ENCODE measurements at regions of chrX and their contacts with region 1.

Region 1: DNA sequence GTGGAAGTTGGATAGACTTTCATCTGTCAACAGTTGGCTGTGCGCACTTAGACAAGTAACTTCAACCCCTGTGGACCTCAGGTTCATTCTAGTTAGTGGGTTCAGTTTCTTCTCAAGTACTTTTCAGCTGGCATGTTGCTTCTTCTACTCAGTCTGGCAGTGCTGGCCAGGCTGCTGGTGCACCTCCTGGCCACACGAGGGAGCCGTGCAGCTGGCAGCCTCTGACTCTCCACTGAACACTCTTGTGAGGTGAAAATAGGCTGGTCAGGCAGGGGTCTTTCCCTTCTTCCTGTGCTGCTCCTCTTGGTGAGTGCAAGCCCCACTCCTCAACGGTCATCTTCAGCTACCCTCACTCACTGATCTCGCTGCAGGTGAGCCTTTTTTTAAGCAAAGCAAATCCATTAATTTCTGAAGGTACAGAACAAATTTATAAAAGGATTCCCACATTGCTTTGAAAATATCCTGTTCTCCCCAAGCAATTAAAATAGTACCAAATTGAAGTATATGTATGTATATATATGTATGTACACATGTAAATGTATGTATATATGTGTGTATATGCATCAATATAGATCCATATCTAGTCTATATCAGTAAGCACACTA is 30.6 kb downstream of the LONRF3 start:
- DNase-seq: peak; percentile 57
- ATAC-seq: peak; percentile 95
- H3K4me3 ChIP-seq: no peak overlapping the region
- H3K27ac ChIP-seq: no peak overlapping the region; the same call in 1 of the 2 replicates
- H3K4me1 ChIP-seq: peaks cover 14% of the 10 kb centered on the region; the same call in 1 of the 2 replicates
- H3K27me3 ChIP-seq: no peaks in the 10 kb centered on the region
- CTCF ChIP-seq: peak; percentile 95

Region 2: DNA sequence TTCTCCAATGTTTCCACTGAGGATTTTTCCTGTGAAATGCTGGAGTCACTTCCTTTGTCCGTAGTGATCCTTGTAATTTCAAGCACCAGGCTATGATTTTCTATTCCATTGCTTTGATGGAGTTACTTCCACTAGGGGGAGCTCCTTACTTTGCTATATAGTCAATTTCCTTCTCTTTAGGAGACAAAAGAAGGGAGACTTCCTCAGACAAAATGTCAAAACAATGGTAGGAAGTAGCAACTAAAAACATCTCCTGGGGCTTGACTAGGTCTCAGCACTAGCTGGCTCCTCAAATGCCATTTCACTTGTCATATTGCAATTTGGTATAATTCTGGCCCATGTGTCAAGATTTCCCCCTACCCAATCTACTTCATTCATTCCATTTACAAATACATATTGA is 157.3 kb before region 1 on chrX:
- CTCF ChIA-PET with region 1: no interaction called
- POLR2A ChIA-PET with region 1: interaction called, 3 read pairs
- in situ Hi-C with region 1: no loop called
- intact Hi-C with region 1: loop called (anchors 5 kb)
- DNase-seq: peak; percentile 53
- ATAC-seq: peak; percentile 87
- H3K4me3 ChIP-seq: no peak overlapping the region
- H3K27ac ChIP-seq: no peak overlapping the region
- H3K4me1 ChIP-seq: no peaks in the 10 kb centered on the region
- H3K27me3 ChIP-seq: no peaks in the 10 kb centered on the region
- CTCF ChIP-seq: peak; percentile 70

Region 3: DNA sequence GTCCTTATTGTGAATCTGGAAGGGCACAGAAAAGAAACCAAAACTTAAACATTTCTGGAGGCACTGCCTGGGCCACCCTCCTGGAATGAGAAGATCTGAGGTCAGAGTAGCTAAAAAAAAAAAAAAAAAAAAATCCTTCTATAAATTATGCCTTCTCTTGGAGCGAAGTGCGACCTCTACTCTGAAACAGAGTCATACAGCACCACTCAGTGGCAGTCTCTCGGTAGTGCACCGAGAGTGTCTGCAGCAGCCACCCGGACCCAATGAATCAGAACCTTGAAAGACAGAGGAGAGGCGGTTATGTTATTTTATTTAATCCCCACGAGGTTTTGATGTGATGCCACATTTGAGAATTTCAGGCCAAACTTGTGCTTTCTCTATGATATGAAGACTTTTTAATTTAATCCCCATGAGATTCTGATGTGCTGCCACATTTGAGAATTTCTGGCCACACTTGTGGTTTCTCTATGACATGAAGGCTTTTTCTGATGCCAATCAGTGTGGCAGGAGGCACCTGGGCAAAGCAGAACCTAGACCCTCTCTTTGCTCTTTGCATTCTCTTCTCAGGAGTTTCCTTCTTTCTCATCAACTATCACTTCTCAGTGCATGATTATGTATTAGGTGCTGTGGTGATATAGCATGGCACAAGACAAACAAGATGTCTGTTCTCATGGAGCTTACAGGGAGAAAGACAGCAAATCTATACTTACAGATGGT is 62.2 kb after region 1 on chrX:
- CTCF ChIA-PET with region 1: interaction called, 6 read pairs
- POLR2A ChIA-PET with region 1: no interaction called
- in situ Hi-C with region 1: no loop called
- intact Hi-C with region 1: loop called (anchors 2 kb)
- DNase-seq: peak; percentile 36
- ATAC-seq: peak; percentile 88
- H3K4me3 ChIP-seq: no peak overlapping the region
- H3K27ac ChIP-seq: 0 out of 2 replicates have a peak overlapping the region, but pooled peaks have one; percentile 49
- H3K4me1 ChIP-seq: peaks cover 4% of the 10 kb centered on the region; the same call in 1 of the 2 replicates
- H3K27me3 ChIP-seq: no peaks in the 10 kb centered on the region
- CTCF ChIP-seq: peak; percentile 79

Region 4: DNA sequence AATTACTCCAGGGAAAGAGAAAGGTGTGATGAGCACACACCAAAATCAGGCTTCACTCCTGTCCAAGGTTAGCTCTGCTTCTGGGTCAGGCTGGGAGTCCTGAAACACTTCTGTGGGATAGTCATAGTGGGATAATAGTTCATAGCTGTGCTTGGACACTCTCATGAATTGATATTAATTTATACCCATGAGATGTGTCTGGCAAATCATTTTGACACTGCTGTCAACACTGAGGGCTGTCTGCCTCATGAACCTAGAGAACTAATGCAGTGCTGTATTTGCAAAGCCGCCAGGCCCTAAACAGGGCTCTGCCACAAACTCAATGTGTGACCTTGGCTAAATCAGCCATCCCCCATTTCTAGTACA is 206.6 kb after region 1 on chrX:
- CTCF ChIA-PET with region 1: no interaction called
- POLR2A ChIA-PET with region 1: no interaction called
- in situ Hi-C with region 1: no loop called
- intact Hi-C with region 1: loop called (anchors 10 kb)
- DNase-seq: no peak
- ATAC-seq: no peak
- H3K4me3 ChIP-seq: no peak overlapping the region
- H3K27ac ChIP-seq: no peak overlapping the region
- H3K4me1 ChIP-seq: no peaks in the 10 kb centered on the region
- H3K27me3 ChIP-seq: peaks cover 22% of the 10 kb centered on the region
- CTCF ChIP-seq: no peak

Region 5: DNA sequence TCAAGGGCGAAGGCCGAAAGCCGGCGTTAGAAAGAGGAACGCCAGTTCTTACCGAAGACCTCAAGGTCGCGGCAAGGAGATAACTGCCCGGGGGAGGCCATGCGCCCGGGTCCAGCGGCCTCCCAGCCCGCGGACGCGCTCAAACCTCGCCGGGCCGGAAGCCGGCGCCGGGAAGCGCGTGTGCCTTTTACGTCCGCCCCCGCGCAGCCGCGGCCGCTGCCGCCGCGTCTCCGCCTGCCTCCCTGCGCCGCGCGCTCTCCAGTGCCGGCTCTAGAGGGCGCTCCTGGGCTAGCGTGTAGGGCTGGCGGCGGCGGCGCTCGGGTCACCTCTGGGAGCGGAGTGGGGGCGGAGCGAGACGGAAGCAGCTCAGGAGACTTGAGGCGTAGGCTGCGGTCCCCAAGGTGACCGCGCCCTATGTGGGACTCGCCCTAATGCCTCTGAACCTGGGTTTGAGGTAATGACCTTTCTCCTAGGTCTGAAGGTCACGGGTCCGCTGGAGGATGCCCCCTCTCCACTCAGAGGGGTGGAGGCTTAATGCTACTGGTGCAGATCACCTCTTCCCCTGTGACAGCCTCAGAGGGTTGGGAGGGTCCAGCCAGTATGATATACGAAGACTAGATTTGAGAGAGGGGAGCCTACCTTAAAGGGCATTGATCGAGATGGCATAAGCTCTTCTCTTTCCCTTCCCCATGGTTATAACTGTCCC is 464.1 kb after region 1 on chrX:
- CTCF ChIA-PET with region 1: no interaction called
- POLR2A ChIA-PET with region 1: interaction called, 12 read pairs
- in situ Hi-C with region 1: no loop called
- intact Hi-C with region 1: no loop called
- DNase-seq: no peak
- ATAC-seq: peak; percentile 78
- H3K4me3 ChIP-seq: peak overlapping the region; percentile 92 to 96
- H3K27ac ChIP-seq: peak overlapping the region; percentile 90
- H3K4me1 ChIP-seq: peaks cover 17% of the 10 kb centered on the region
- H3K27me3 ChIP-seq: no peaks in the 10 kb centered on the region
- CTCF ChIP-seq: peak; percentile 95

Measured in Panc1 (cell line).